Vagina (tissue), 2 donors: ENCODE measurements at regions of chr16 and their contacts with region 1.

Region 1: DNA sequence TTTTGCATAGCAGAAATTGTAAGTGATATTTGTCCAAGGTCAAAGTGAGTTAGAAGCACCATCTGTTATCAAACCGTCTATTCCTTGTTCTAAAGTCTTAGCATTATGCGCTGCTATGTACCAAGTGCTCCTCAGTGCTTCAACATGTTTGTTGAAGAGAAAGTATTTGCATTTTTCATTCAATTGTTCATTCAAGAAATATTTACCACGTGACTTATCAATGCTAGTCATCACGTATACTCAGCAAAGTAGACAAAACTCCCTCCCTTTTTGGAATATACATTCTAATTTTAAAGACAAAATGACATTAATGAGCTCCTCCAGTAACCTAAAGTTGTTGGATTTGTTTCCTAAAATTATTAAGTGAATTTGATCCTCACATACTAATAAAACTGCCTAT is 388.0 kb upstream of the CDH8 start:
- DNase-seq: no peak
- H3K4me3 ChIP-seq: no peak overlapping the region
- H3K27ac ChIP-seq: no peak overlapping the region
- H3K4me1 ChIP-seq: no peaks in the 10 kb centered on the region
- H3K27me3 ChIP-seq: no peaks in the 10 kb centered on the region
- CTCF ChIP-seq: no peak
- POLR2A ChIP-seq: no peak

Region 2: DNA sequence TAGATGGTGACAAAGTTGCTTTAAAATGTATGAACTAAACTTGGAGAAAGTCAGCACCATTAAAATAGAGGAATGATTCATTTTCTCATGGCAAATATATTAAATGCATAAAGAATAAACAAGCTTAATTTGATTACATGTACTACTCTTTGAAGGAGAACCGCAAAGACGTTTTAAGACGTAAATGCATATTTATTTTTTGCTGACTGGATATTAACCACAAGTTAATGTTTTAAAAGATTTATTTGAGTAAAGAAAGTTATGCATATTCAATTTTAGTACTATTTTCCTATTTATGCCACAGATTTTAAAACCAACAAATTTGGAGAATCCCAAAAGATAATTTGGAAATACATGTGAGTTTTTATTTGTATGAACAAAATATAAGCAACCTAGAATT is 1509.9 kb before region 1 on chr16:
- intact Hi-C with region 1: loop called (anchors 5 kb)
- DNase-seq: no peak
- H3K4me3 ChIP-seq: no peak overlapping the region
- H3K27ac ChIP-seq: no peak overlapping the region
- H3K4me1 ChIP-seq: no peaks in the 10 kb centered on the region
- H3K27me3 ChIP-seq: no peaks in the 10 kb centered on the region
- CTCF ChIP-seq: no peak
- POLR2A ChIP-seq: no peak

Region 3: DNA sequence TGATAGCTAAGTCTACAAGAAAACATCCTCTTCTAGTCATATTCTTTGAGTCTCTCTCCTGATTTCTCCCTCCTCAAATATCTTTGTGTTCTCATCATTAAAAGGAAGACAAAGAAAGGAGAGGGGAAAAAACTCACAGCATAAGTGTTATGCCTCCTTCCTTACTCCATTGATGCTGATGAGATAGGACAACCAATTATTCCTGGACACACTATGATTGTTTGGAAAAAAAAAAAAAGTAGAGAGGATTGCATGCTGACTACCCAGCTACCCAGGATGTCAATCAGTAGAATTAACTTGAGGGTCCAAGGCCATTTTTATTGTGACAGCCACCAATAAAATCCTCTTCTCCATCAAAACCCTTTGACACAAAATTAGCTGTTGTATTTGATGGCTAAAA is 88.8 kb before region 1 on chr16:
- intact Hi-C with region 1: no loop called
- DNase-seq: no peak
- H3K4me3 ChIP-seq: no peak overlapping the region
- H3K27ac ChIP-seq: no peak overlapping the region
- H3K4me1 ChIP-seq: no peaks in the 10 kb centered on the region
- H3K27me3 ChIP-seq: no peaks in the 10 kb centered on the region
- CTCF ChIP-seq: no peak
- POLR2A ChIP-seq: no peak

Region 4: GRCh38 chr16:62530426-62530825 is 106.2 kb after region 1 on chr16:
- intact Hi-C with region 1: no loop called
- DNase-seq: no peak
- H3K4me3 ChIP-seq: no peak overlapping the region
- H3K27ac ChIP-seq: no peak overlapping the region
- H3K4me1 ChIP-seq: no peaks in the 10 kb centered on the region
- H3K27me3 ChIP-seq: no peaks in the 10 kb centered on the region
- CTCF ChIP-seq: no peak
- POLR2A ChIP-seq: no peak